ENCODE measurements at regions of chr2 and their contacts with region 1.

Region 1: DNA sequence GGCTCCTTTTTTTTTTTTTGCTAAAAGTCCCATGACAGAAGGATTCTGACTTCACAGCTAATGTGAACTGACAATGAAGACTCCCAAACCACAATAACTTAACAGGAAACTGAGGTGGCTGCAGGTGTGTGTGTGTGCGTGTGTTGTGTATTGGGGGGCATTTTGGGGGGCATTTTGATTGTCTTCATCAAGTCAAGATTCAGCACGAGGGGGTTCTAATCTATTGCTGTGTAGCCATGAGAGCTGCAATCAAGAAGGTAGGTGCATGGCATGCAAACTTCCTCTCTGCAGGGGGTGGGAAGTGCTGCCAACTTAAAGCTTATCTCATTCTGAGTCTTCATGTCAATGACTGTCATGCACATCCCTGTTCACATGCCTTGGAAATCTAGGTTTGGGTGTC is 25.2 kb downstream of the SPRED2 start:
- DNase-seq: no peak
- H3K27ac ChIP-seq: no peak overlapping the region
- CTCF ChIP-seq: no peak

Region 2: DNA sequence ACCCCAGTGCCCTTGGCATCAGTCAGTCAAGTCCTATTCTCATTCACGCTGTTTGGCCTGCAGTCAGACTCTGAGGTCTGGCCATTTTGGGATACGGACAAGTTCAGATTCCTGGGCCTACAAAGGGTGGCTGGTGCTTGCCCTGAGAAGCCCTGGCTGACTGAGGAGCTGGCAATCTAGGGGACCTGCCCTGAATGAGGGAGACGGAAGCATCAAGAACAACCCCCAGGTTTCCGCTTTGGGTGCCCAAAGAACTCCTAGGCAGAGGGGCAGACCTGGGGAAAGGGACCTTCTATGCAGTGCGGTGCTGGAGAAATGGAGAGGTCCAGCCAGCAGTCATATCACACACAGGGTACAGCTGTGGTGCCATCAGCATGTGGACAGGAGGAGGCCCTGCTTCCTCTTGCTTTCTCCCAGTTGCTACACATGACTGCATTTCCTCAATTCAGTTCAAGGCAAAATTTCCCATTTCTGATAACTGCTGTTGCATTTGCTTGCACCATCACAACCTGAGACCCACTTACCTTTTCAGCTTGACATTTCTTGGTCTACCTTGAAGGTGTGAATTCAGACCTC is 1024.1 kb before region 1 on chr2:
- CTCF ChIA-PET with region 1: no interaction called
- POLR2A ChIA-PET with region 1: no interaction called
- DNase-seq: no peak
- H3K27ac ChIP-seq: no peak overlapping the region
- CTCF ChIP-seq: no peak

Region 3: DNA sequence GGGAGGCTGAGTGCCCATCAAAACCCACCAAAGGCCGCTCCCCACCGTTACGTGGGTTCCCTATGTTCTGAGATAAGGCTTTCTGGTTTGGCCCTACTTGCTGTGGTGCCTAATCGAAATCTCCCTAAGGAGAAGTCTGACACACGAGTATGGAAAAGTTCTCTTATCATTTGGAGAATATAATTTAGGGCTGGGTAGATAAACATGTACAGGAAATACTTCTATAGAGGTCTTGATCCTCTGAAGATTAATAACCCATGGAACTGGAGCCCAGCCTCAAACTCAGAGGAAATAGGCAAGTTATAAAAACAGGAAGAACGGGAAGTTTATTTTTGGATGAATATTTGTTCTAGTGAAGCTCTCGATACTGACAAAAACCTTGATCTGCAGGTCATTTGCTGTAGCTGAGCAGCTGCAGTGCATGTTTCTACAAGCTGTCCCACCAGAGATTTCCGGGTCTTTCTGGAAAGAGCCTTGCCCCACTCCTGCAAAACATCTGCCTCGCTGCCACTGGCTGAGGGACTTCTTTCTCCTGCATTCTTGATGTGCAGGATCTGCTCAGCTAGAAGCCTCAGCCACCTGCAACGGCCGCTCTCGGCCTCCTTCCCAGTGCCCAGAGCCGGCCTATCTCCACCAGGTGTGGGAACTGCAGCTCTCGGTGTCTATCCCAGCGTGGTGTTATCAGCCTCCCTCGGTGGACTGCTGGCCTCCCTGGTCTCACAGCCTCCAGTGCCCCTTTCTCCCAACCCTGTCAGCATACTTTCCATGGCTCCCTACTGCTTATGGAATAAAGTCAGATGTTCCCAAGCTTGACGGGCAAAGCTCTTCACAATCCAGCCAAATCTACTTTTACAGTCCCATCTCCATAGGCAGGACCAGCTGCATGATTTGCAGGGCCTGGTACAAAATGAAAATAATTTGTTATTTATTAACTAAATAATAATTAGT is 23.4 kb before region 1 on chr2:
- CTCF ChIA-PET with region 1: interaction called, 3 read pairs
- POLR2A ChIA-PET with region 1: interaction called, 10 read pairs
- DNase-seq: no peak
- H3K27ac ChIP-seq: peak overlapping the region; percentile 85
- CTCF ChIP-seq: no peak

Measured in RWPE1 (cell line).